Right ventricle myocardium inferior (tissue), 1 donor: ENCODE measurements at regions of chr10 and their contacts with region 1.

Region 1: GRCh38 chr10:102743588-102744373 is at the start of gene WBP1L:
- DNase-seq: peak; percentile 96
- ATAC-seq: peak; percentile 99
- total RNA-seq, gene WBP1L: 25.9 TPM

Region 2: GRCh38 chr10:102776779-102777456 is 33.1 kb after region 1 on chr10:
- intact Hi-C with region 1: loop called (anchors 2 kb)
- DNase-seq: peak; percentile 85
- ATAC-seq: peak; percentile 87

Region 3: GRCh38 chr10:102815790-102816549 is 72.2 kb after region 1 on chr10:
- intact Hi-C with region 1: loop called (anchors 5 kb)
- DNase-seq: peak; percentile 81
- ATAC-seq: peak; percentile 65

Region 4: GRCh38 chr10:102853944-102854694 is 110.3 kb after region 1 on chr10 and contains the start of gene BORCS7:
- intact Hi-C with region 1: loop called (anchors 2 kb)
- DNase-seq: peak; percentile 96
- ATAC-seq: peak; percentile 99
- total RNA-seq, gene BORCS7: 12.3 TPM

Region 5: GRCh38 chr10:103157246-103157645 is 413.5 kb after region 1 on chr10:
- intact Hi-C with region 1: no loop called
- DNase-seq: no peak
- ATAC-seq: no peak

Region 6: DNA sequence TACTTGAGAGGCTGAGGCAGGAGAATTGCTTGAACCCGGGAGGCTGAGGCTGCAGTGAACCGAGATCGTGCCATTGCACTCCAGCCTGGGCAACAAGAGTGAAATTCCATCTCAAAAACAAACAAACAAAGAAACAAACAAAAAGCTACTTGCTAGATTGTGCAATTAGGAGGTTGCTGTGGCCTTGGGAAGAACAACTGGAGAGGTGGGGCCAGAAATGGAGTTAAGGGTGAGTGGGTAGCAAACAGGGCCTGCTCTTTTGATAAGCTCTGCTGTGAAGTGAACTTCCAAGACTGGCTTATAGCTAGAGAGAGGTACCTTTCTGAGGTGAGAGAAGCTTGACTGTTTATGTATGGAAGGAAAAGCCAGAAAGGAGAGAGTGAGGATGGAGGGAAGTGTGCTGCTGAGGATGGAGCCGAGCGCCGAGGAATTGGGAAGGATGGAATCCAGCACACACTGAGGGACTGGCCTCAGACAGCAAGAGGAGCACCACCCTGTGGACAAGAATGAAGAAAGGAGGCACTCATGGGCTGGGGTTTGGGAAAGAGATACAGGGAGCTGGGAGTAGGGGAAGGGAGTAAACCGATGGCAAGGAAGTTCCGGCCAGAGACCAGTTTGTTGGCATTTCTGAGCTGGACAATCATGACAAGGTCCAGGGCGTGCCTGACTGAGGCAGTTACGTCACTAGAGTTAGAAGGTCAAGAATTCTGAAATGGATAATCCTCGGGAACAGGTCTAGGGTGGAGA is 494.9 kb after region 1 on chr10:
- intact Hi-C with region 1: loop called (anchors 10 kb)
- DNase-seq: no peak
- ATAC-seq: peak; percentile 83